Dendritic cell treated with granulocyte-macrophage colony-stimulating factor and Interleukin-4, amounts not matched to agents 40 ng/mL and 50 ng/mL, for 4 days (primary cell): ENCODE measurements at regions of chr20 and their contacts with region 1.

Region 1: DNA sequence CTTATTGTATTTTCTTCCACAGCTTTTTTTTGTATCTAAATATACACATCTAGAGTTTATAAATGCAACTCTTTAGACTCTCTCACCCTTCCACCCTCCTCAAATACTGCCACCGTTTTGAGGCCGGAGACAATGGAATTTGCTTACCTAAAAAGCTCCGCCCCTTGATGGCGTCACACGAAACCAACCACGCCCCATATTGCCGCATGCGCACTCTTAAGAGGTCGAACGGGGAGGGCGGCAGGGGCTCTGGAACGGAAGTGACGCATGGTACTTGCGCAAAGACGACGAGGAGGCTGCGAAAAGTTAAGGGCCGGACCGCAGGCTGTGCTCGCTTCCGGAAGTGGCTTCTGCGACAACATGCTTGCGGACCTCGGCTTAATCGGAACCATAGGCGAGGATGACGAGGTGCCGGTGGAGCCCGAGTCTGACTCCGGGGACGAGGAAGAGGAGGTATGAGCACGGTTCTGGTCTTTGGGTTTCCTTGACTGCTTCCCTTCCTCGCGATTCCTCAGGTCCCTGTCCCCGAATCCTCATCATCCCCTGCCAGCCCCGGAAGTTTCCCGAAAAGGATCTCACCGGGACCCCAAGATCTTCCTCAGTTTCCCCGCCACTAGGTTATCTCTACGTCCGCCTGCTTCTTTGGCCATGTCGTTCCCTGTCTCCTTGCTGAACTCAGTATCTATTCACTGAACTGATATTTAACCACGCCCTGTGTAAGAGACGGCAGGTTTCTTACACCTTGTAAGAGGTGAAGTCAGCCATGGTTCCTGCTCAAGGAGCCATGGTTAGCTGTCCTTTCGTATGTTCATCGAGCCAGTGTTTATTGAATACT is at the start of gene DDX27:
- H3K4me3 Mint-ChIP-seq: peak within 1 kb of the TSS; percentile 91
- H3K27ac Mint-ChIP-seq: peak within 1 kb of the TSS; percentile 92
- H3K4me1 Mint-ChIP-seq: peaks cover 18% of the 10 kb centered on the region
- H3K27me3 Mint-ChIP-seq: no peaks in the 10 kb centered on the region

Region 2: GRCh38 chr20:49132995-49133478 is 86.3 kb before region 1 on chr20:
- intact Hi-C with region 1: loop called (anchors 1 kb)
- H3K4me3 Mint-ChIP-seq: no peak overlapping the region
- H3K27ac Mint-ChIP-seq: no peak overlapping the region
- H3K4me1 Mint-ChIP-seq: peaks cover 6% of the 10 kb centered on the region
- H3K27me3 Mint-ChIP-seq: no peaks in the 10 kb centered on the region

Region 3: GRCh38 chr20:49166534-49167449 is 52.5 kb before region 1 on chr20:
- intact Hi-C with region 1: loop called (anchors 10 kb)
- H3K4me3 Mint-ChIP-seq: no peak overlapping the region
- H3K27ac Mint-ChIP-seq: no peak overlapping the region
- H3K4me1 Mint-ChIP-seq: peaks cover 11% of the 10 kb centered on the region
- H3K27me3 Mint-ChIP-seq: no peaks in the 10 kb centered on the region

Region 4: DNA sequence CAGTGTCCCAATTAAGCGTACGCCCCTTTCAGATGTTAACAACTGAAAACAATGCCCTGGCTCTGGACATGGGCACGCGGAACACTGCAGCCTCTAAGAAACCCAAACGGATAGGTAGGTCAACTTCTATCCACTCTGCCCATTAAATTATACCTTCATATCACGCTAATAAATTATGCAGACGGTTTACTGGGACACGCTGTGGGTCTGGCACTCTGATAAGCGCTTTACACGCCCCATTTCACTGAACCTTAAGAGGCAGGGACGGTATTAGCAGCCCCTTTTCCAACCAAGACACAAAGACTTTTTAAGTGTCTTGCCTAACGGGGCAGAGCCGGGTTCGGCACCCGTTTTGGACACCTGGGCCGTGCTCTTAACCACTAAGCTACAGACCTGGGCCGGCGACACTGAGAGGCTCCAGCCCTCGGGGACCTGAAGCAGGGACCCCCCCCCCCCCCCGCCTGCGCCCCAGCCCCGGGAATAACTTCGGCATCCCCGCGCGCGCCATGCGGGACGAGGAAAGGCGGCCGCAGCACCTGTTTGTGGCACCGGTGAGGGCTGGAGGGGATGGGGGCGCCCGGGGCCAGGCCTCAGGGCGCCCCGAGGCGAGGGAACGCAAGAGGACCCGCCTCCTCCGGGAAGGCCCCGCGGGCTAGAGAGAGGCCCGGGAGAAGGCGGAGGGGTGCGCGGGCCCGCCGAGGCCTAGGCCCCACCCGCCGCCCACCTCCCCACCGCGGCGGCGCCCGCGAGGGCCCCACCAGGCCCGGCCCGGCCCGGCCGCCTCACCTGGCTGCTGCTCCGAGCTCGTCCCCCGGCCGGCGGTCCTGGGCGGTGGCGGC is 31.8 kb before region 1 on chr20:
- intact Hi-C with region 1: loop called (anchors 1 kb)
- H3K4me3 Mint-ChIP-seq: peak overlapping the region; percentile 78
- H3K27ac Mint-ChIP-seq: peak overlapping the region; percentile 77
- H3K4me1 Mint-ChIP-seq: peaks cover 36% of the 10 kb centered on the region
- H3K27me3 Mint-ChIP-seq: peaks cover 5% of the 10 kb centered on the region

Region 5: DNA sequence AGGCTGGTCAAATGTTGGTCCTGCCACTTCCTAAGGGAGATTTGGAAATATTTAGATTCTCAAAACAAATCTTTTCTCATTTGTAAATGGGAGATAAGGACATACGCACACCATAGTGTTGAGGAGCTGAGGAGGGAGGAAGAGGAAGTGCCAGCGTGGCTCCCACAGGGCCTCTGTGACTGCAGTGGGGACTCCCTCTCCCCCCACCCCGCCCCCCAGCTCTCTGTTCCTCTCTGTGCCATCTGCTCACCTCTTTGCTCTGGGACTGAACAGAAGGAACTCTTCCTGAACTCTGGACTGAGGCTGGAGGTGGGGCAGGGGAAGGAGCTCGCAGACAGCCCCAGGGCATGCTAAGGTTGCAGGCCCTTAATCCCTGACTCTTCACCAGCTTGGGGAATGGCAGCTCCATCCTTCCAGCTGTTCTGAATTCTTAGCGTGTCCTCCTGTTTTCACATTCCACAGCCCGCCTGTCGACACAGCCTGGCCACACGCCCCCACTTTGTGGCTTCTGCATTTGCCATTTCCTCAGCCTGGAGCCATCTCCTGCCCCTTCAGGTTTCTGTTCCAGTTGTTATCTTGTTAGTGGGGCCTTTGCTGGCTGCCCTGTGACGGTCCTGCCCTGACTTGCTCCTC is 11.4 kb after region 1 on chr20:
- intact Hi-C with region 1: loop called (anchors 1 kb)
- H3K4me3 Mint-ChIP-seq: peak overlapping the region; percentile 65
- H3K27ac Mint-ChIP-seq: peak overlapping the region; percentile 95
- H3K4me1 Mint-ChIP-seq: peaks cover 33% of the 10 kb centered on the region
- H3K27me3 Mint-ChIP-seq: no peaks in the 10 kb centered on the region